PC-9 (cell line): ENCODE measurements at regions of chr20 and their contacts with region 1.

Region 1: GRCh38 chr20:59403261-59403961 is 103.0 kb downstream of the EDN3 start:
- DNase-seq: peak in 1 of 2 experiments; percentile 31
- H3K4me3 ChIP-seq: no peak overlapping the region
- H3K27ac ChIP-seq: no peak overlapping the region
- H3K4me1 ChIP-seq: no peaks in the 10 kb centered on the region
- H3K27me3 ChIP-seq: peaks cover 99% of the 10 kb centered on the region
- CTCF ChIP-seq: peak; percentile 97

Region 2: DNA sequence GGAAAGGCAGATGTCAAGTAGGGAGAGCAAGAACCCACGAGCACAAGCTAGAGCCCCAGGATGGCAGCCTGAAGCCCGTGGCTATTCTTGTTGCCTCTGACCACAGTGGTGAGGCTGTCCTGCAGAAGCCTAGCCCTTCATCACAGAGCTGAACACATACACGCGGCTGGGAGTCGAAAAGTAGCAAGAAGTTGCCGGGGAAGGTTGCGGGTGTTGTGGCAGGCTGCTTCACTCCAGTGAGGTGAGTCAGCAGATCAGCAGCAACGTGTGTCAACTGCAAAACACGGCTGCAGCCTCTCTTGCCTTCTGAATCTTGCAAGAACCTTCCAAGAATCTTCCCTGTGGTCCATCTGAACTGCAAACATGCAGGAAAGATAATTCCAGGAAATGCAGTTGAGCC is 763.0 kb before region 1 on chr20:
- CTCF ChIA-PET with region 1: interaction called, 12 read pairs
- POLR2A ChIA-PET with region 1: no interaction called
- intact Hi-C with region 1: no loop called
- DNase-seq: peak; percentile 26 to 46
- H3K4me3 ChIP-seq: no peak overlapping the region
- H3K27ac ChIP-seq: no peak overlapping the region
- H3K4me1 ChIP-seq: peaks cover 21% of the 10 kb centered on the region
- H3K27me3 ChIP-seq: no peaks in the 10 kb centered on the region
- CTCF ChIP-seq: no peak